Right lobe of liver (tissue), 6 donors: ENCODE measurements at regions of chr11 and their contacts with region 1.

Region 1: GRCh38 chr11:14519917-14520746 is at the start of gene PSMA1:
- DNase-seq: peak; percentile 95 to 96 (median 96)
- ATAC-seq: peak; percentile 94 to 98 (median 96)
- H3K4me3 ChIP-seq: peak within 1 kb of the TSS; percentile 46 to 87 (median 68)
- H3K27ac ChIP-seq: peak within 1 kb of the TSS; percentile 79 to 91 (median 80)
- H3K4me1 ChIP-seq: peaks cover 0 to 10% (median 4%) of the 10 kb centered on the region in 4 donors
- H3K27me3 ChIP-seq: no peaks in the 10 kb centered on the region
- CTCF ChIP-seq: peak; percentile 27 to 80 (median 36)
- POLR2A ChIP-seq: peak; percentile 90
- total RNA-seq, gene PSMA1: 69.4 to 95.1 (median 90.7) TPM

Region 2: GRCh38 chr11:14148653-14149273 is 371.4 kb before region 1 on chr11:
- intact Hi-C with region 1: no loop called
- DNase-seq: no peak
- ATAC-seq: peak; percentile 70 to 83 (median 82)
- H3K4me3 ChIP-seq: no peak overlapping the region
- H3K27ac ChIP-seq: no peak overlapping the region
- H3K4me1 ChIP-seq: no peaks in the 10 kb centered on the region
- H3K27me3 ChIP-seq: no peaks in the 10 kb centered on the region
- CTCF ChIP-seq: peak; percentile 63 to 74 (median 70)
- POLR2A ChIP-seq: no peak

Region 3: DNA sequence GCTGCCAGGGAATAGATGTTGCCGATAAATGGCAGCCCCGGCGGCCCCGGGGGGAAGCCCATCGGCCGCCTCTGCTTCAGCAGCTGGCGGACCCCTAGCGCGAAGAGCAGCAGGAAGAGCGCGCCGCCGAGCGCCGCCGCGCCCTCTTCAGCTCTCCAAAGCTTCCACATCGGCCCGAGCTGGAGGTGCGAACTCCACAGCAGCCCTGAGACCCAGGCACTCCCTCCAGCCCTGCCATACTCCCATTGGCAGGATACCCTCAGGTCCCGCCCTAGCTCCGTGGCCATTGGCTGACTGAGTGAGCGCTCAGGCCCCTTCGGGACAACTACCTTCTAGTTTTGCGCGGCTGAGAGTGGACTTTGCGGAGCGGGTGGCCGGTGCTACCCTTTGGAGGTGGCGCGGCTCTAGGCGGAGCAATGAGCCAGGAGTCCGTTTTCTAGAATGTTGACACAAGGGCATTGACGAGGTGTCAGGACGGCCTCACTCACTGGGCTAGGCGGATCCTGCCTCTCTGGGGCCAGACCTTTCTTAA is 372.0 kb after region 1 on chr11 and contains the start of gene CYP2R1:
- intact Hi-C with region 1: loop called in 1 of 2 experiments (anchors 10 kb)
- DNase-seq: peak; percentile 97 to 99 (median 98)
- ATAC-seq: peak; percentile 93 to 99 (median 96)
- H3K4me3 ChIP-seq: peak within 1 kb of the TSS; percentile 63 to 67 (median 64)
- H3K27ac ChIP-seq: peak within 1 kb of the TSS; percentile 84 to 93 (median 90)
- H3K4me1 ChIP-seq: peaks cover 0 to 6% (median 2%) of the 10 kb centered on the region in 4 donors
- H3K27me3 ChIP-seq: no peaks in the 10 kb centered on the region
- CTCF ChIP-seq: no peak
- POLR2A ChIP-seq: peak; percentile 76
- total RNA-seq, gene CYP2R1: 4.3 to 11.6 (median 6.3) TPM